Mammary epithelial cell (primary cell): ENCODE measurements at regions of chr13 and their contacts with region 1.

Region 1: GRCh38 chr13:98466634-98467236 is 110.2 kb downstream of the STK24 start:
- DNase-seq: no peak
- H3K4me3 ChIP-seq: no peak overlapping the region
- H3K27ac ChIP-seq: no peak overlapping the region
- H3K4me1 ChIP-seq: no peaks in the 10 kb centered on the region
- H3K27me3 ChIP-seq: no peaks in the 10 kb centered on the region
- CTCF ChIP-seq: peak; percentile 59 to 64

Region 2: DNA sequence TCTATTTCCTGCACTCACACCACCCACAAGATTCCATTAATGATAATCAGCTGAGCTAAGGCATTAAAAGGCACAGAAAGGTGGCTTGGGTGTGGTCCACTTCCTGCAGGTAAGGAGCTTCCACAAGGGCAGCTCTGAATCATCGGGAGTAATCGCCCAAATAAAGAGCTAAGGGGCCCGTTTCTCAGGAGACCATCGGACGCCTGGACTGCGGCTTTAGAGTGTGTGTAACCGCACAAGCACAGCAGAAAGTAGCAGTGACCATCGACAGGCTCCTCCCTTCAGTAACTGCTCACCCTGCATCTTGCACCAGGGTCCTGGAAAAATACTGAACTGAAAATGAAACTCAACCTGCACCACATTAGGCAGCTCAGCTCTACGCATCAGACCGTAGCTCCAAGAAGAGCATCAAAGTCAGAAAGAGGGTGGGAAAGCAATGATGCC is 104.2 kb after region 1 on chr13:
- CTCF ChIA-PET with region 1: no interaction called
- dilution Hi-C with region 1: no loop called
- in situ Hi-C with region 1: no loop called
- intact Hi-C with region 1: loop called (anchors 5 kb)
- DNase-seq: peak; percentile 81
- H3K4me3 ChIP-seq: peak overlapping the region; percentile 3 to 38 (median 32)
- H3K27ac ChIP-seq: peak overlapping the region; percentile 60
- H3K4me1 ChIP-seq: peaks cover 47% of the 10 kb centered on the region
- H3K27me3 ChIP-seq: no peaks in the 10 kb centered on the region
- CTCF ChIP-seq: no peak

Region 3: GRCh38 chr13:98842864-98843481 is 376.2 kb after region 1 on chr13:
- CTCF ChIA-PET with region 1: no interaction called
- dilution Hi-C with region 1: no loop called
- in situ Hi-C with region 1: loop called in 1 of 2 experiments (anchors 25 kb)
- intact Hi-C with region 1: no loop called
- DNase-seq: peak; percentile 48
- H3K4me3 ChIP-seq: no peak overlapping the region
- H3K27ac ChIP-seq: no peak overlapping the region
- H3K4me1 ChIP-seq: peaks cover 6% of the 10 kb centered on the region
- H3K27me3 ChIP-seq: no peaks in the 10 kb centered on the region
- CTCF ChIP-seq: peak; percentile 88 to 91